GM12878 (cell line): ENCODE measurements at regions of chr13 and their contacts with region 1.

Region 1: GRCh38 chr13:83876546-83876945 is 5.7 kb downstream of the SLITRK1 start:
- DNase-seq: peak; percentile 31
- ATAC-seq: peak; percentile 97
- H3K4me3 ChIP-seq: no peak overlapping the region
- H3K27ac ChIP-seq: no peak overlapping the region
- H3K4me1 ChIP-seq: no peaks in the 10 kb centered on the region
- H3K27me3 ChIP-seq: no peaks in the 10 kb centered on the region
- CTCF ChIP-seq: no peak
- EP300 ChIP-seq: peak; percentile 45 to 62; a peak in 2 of 4 replicates
- POLR2A ChIP-seq: no peak
- RAD21 ChIP-seq: no peak

Region 2: DNA sequence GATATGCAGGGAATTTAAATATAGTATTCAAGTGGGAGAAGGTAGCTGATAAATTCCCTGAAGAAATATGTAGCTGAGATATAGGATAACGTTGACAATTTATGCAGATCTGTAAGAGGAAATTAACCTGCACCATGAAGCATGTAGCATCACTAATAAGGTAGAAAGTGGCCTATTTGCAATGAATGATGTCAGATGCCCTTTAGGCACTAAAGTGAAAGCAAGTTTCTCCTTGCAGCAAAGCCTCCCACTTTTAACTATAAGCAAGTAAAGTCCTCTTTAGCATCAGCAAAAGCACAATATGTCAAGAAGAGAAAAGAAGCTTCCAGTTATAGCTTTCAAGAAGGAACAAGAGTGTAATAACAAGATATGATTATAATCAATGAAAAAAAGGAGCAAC is 108.2 kb after region 1 on chr13:
- CTCF ChIA-PET with region 1: no interaction called
- POLR2A ChIA-PET with region 1: no interaction called
- RAD21 ChIA-PET with region 1: no interaction called
- SMC1A ChIA-PET with region 1: no interaction called
- in situ Hi-C with region 1: no loop called
- intact Hi-C with region 1: loop called (anchors 5 kb)
- DNase-seq: no peak
- ATAC-seq: peak; percentile 61
- H3K4me3 ChIP-seq: no peak overlapping the region
- H3K27ac ChIP-seq: no peak overlapping the region
- H3K4me1 ChIP-seq: no peaks in the 10 kb centered on the region
- H3K27me3 ChIP-seq: no peaks in the 10 kb centered on the region
- CTCF ChIP-seq: no peak
- EP300 ChIP-seq: no peak
- POLR2A ChIP-seq: no peak
- RAD21 ChIP-seq: no peak